MCF 10A (cell line): ENCODE measurements at regions of chr1 and their contacts with region 1.

Region 1: DNA sequence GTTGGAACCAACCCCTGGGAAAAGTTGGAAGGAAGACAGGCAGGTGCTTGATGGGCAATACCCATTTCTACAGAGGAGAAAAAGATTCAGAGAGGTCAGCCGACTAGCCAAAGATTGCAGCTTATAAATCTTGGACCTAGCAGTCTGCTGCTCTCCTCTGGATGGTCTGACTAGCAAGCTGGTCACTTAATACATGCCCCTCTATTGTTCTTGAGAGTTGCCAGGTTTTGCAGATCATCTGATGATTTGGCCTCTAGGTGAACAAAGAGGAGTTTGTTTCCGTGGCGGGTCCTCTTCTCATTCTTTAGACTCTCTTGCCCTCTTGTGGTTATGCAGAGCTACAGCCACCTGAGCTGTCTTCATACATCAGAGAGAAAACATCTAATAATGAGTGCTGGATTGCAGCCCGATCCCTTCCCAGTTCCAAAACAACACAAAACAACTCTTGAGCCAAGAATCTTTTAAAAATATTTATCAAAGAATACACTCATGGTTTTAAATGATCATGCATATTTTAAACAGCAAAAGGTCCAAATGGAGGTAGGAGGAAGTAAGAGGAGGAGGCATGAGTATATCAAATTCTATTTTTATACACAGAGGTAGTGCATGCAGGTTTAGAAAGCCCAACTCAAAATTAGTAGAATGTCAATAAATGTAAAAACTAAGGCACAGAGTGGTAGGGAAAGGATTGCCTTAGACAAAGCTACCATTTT is 115.7 kb downstream of the SLC30A10 start:
- DNase-seq: peak; percentile 85
- H3K4me3 Mint-ChIP-seq: no peak overlapping the region
- H3K27ac Mint-ChIP-seq: no peak overlapping the region
- H3K4me1 Mint-ChIP-seq: no peaks in the 10 kb centered on the region
- H3K27me3 Mint-ChIP-seq: no peaks in the 10 kb centered on the region
- CTCF ChIP-seq: peak; percentile 99

Region 2: DNA sequence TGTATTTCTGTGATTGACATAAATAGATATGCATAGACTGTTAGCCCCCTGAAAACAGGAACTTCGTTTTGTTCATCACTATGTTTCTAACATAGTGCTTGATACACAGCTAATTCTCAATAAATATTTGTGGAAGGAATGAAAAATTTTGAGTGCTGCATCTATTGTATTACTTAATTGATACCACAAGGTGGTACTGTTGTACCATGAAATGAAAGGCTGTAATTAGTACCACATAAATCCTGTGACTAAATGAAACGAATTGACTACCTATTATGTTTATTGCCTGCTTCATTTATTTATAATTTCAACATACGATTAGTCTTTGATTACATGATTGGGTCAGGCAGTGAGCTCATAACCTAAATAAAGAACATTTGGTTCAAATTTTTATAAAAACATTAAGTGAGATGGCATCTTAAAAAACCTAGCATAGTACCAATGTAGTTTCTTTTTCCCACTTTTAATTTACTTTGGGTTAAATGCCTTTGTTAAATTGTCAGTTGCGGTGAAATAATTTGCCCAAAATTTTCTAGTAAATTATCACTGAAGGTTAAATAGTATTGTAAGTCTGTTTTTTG is 1482.5 kb before region 1 on chr1:
- CTCF ChIA-PET with region 1: interaction called, 40 read pairs
- POLR2A ChIA-PET with region 1: interaction called, 5 read pairs
- intact Hi-C with region 1: loop called (anchors 1 kb)
- DNase-seq: peak; percentile 67
- H3K4me3 Mint-ChIP-seq: no peak overlapping the region
- H3K27ac Mint-ChIP-seq: peak overlapping the region; percentile 55
- H3K4me1 Mint-ChIP-seq: no peaks in the 10 kb centered on the region
- H3K27me3 Mint-ChIP-seq: no peaks in the 10 kb centered on the region
- CTCF ChIP-seq: peak; percentile 84

Region 3: DNA sequence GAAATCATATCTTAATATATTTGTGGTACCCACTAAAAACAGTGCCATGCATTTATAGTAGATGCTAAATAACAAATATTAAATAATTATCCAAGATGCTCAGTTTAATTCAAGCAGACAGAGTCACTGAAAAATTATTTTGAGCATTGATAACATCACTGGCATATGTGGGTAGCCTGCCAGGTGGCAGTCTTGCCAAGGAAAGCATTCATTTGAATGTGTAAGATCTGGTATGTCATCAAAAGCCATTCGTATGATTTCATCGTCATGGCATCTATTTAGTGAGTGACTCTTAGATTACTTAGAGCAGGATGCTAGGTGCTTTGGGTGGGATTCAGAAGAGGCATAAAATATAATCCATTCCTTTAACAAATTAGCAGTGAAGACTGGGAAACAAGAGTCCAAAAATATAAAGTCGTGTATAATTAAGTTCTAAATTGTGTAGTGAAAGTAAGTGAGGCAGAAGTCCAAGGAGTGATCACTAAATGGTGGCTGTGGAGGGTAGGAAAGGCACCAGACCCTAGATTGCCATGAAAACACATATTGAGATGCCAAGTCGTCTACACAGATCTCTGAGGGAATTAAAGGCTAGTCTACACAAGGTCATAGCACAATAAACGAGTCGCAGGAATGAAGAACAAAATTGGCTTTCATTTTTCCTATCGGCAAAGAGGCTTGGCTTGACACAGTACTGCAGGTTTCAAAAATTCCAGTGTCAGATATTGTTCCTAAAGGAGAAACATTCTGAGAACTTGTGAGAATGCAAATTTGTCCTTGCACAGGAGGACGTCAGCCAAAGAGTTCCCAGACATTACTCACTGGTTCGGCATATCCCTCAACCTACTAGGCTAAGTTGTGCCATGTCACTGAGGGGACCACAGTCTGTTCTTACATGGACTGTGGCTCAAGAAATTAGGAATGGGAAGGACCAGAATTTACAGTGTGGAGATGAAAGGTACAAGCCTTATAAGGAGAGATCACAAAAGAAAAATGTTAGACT is 508.1 kb before region 1 on chr1:
- CTCF ChIA-PET with region 1: interaction called, 3 read pairs
- POLR2A ChIA-PET with region 1: no interaction called
- intact Hi-C with region 1: loop called (anchors 1 kb)
- DNase-seq: peak; percentile 79
- H3K4me3 Mint-ChIP-seq: no peak overlapping the region
- H3K27ac Mint-ChIP-seq: no peak overlapping the region
- H3K4me1 Mint-ChIP-seq: peaks cover 11% of the 10 kb centered on the region
- H3K27me3 Mint-ChIP-seq: peaks cover 84% of the 10 kb centered on the region
- CTCF ChIP-seq: peak; percentile 49

Region 4: DNA sequence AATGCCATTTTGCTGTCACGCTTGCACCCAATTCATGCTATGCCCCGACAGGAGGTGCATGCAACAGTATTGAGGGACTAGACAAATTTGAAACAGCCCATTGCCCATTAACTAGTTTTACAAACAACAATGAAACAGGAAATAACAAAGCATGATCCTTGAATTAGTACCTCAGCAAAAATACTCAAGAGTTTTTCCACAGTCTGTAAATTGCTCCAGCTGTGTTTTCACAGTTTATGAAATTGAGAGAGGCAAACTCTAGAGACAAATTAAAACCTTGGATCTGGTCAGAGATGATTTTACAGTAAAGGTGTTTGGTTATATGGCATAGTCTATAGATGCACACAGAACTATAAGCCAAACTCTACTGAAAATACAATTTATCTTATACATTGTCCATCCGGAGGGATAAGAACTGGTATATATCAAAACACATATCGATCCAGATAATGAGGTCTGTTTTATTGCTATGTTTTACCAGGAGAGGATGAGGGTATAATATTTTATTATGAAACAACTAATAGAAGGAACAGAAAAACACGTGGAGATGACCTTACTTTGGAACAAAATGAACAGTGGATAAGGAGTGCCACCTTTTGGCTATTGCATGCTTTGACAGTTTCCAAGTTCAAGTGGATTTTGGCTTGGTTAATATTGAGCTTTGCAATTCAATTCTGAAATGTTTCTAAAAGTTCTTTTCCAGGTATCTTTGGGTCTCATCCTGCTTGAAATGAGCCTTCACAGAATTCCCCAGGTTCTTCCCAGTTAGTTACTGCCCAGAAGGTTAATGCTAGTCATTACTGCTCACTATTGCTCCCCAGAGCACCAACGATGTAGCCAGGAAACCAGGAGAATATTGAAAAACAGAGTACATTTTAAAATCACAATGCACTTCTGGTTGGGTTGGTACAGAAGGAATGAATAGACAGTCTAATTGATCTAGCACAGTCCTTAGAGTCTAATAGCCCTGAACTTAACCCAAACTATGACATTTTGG is 245.4 kb before region 1 on chr1:
- CTCF ChIA-PET with region 1: interaction called, 22 read pairs
- POLR2A ChIA-PET with region 1: no interaction called
- intact Hi-C with region 1: loop called (anchors 5 kb)
- DNase-seq: peak; percentile 78
- H3K4me3 Mint-ChIP-seq: no peak overlapping the region
- H3K27ac Mint-ChIP-seq: no peak overlapping the region
- H3K4me1 Mint-ChIP-seq: no peaks in the 10 kb centered on the region
- H3K27me3 Mint-ChIP-seq: peaks cover 91% of the 10 kb centered on the region
- CTCF ChIP-seq: peak; percentile 85

Region 5: GRCh38 chr1:219660666-219661463 is 151.8 kb before region 1 on chr1:
- CTCF ChIA-PET with region 1: interaction called, 4 read pairs
- POLR2A ChIA-PET with region 1: no interaction called
- intact Hi-C with region 1: loop called (anchors 5 kb)
- DNase-seq: peak; percentile 89
- H3K4me3 Mint-ChIP-seq: no peak overlapping the region
- H3K27ac Mint-ChIP-seq: no peak overlapping the region
- H3K4me1 Mint-ChIP-seq: peaks cover 10% of the 10 kb centered on the region
- H3K27me3 Mint-ChIP-seq: peaks cover 55% of the 10 kb centered on the region
- CTCF ChIP-seq: peak; percentile 57

Region 6: GRCh38 chr1:219782311-219782710 is 30.3 kb before region 1 on chr1:
- CTCF ChIA-PET with region 1: interaction called, 10 read pairs
- POLR2A ChIA-PET with region 1: interaction called, 3 read pairs
- intact Hi-C with region 1: no loop called
- DNase-seq: no peak
- H3K4me3 Mint-ChIP-seq: no peak overlapping the region
- H3K27ac Mint-ChIP-seq: no peak overlapping the region
- H3K4me1 Mint-ChIP-seq: no peaks in the 10 kb centered on the region
- H3K27me3 Mint-ChIP-seq: peaks cover 45% of the 10 kb centered on the region
- CTCF ChIP-seq: no peak

Region 7: GRCh38 chr1:219824338-219824737 is 11.7 kb after region 1 on chr1:
- CTCF ChIA-PET with region 1: interaction called, 51 read pairs
- POLR2A ChIA-PET with region 1: interaction called, 3 read pairs
- intact Hi-C with region 1: no loop called
- DNase-seq: no peak
- H3K4me3 Mint-ChIP-seq: no peak overlapping the region
- H3K27ac Mint-ChIP-seq: no peak overlapping the region
- H3K4me1 Mint-ChIP-seq: no peaks in the 10 kb centered on the region
- H3K27me3 Mint-ChIP-seq: peaks cover 46% of the 10 kb centered on the region
- CTCF ChIP-seq: no peak